Activated T-helper 1 cell treated with anti-CD3 and anti-CD28 coated beads, Interleukin-12 subunit alpha, Interleukin-12 subunit beta, Interleukin-2, Interleukin-4 antibody, amounts not matched to agents 30 ng/mL and 10 ng/mL and 1 ng/mL, durations not matched to agents 14 hours and 24 hours and 36 hours (primary cell): ENCODE measurements at regions of chr11 and their contacts with region 1.

Region 1: DNA sequence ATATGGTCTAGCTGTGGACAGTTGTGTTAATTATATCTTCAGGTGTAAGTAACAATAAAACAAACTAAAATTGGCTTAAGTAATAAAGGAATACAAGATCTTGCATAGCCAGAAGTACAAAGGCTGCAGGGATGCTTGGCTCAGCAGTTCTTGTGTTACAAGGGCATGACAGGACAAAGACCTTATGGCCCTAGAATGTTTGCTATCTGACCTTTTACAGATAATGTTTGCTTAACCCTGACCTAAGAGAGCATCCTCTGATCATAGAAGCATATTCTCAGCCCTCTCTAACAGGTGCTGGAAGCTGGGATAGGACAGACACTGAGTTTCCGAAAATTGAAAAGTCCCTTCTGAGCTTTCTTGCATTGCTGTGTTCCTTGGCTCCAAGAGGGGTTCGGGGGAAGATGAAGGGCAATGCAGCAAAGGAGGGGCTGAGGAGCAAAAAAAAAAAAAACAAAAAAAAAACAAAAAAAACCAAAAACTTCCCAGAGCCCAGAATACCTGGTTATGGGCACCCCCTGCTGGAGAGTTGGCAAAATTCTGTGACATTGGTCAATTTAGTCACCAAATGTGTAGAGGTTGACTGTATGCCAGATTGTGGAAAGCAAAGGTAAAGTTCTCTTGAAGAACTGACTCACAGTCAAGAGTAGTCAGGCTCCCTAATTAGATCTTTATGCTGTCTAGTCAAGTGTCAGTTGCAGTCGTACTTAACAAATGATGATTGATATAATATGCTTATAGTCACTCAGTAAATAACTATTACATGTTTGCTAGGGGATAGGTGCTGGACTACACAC is 10.4 kb upstream of the HIKESHI start:
- DNase-seq: peak; percentile 39
- H3K4me3 Mint-ChIP-seq: peak overlapping the region; percentile 34
- H3K27ac Mint-ChIP-seq: peak overlapping the region; percentile 82
- H3K4me1 Mint-ChIP-seq: peaks cover 61% of the 10 kb centered on the region
- H3K27me3 Mint-ChIP-seq: no peaks in the 10 kb centered on the region

Region 2: DNA sequence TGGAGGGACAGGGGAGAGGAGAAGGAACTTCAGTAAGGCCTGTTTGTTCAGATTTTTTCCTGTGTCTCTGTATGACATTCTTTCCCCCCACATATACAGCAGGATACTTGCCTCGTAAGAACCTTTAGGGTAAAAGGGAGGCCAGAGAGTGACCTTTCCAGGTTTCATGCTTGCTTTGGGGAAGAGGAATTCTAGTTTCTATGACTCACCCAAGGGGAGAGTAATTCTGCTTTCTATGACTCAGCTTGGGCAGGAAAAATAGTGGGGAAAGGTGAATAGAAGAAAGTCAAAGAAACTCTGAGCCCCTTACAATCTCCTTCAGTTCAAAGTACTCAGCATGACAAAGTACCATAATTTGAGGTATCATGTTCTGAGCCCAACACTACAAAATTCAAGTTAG is 1121.4 kb before region 1 on chr11:
- intact Hi-C with region 1: no loop called
- DNase-seq: no peak
- H3K4me3 Mint-ChIP-seq: no peak overlapping the region
- H3K27ac Mint-ChIP-seq: no peak overlapping the region
- H3K4me1 Mint-ChIP-seq: no peaks in the 10 kb centered on the region
- H3K27me3 Mint-ChIP-seq: no peaks in the 10 kb centered on the region

Region 3: DNA sequence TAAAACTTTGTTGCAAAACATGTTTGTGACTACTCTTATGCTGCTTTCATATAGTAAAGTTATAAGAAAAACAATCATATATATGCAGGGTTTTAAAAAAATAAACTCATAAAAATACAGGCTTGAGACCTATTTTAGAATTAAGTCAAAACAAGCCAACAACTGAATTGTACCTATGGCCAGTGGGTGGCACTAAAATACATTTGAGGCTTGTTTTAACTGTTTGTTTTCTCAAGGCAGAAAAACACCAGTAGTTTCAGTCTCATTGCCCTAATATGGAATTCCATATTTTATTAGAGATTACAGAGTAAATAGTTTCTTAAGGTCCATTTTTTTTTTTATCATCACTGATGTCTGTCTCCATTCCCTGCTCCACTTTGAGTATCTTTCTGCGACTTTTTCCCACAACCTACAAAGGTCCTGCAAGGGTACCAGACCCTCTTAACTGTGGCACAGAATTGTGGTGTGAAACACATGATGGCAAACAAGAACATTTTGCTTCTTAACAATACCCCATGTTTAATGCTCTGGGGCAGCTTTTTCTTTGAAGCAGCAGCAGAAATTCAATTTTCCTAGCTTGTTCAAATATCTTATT is 597.2 kb before region 1 on chr11:
- intact Hi-C with region 1: no loop called
- DNase-seq: no peak
- H3K4me3 Mint-ChIP-seq: no peak overlapping the region
- H3K27ac Mint-ChIP-seq: no peak overlapping the region
- H3K4me1 Mint-ChIP-seq: peaks cover 51% of the 10 kb centered on the region
- H3K27me3 Mint-ChIP-seq: peaks cover 4% of the 10 kb centered on the region

Region 4: GRCh38 chr11:85752890-85753581 is 538.6 kb before region 1 on chr11:
- intact Hi-C with region 1: loop called (anchors 2 kb)
- DNase-seq: peak; percentile 89
- H3K4me3 Mint-ChIP-seq: peak overlapping the region; percentile 73
- H3K27ac Mint-ChIP-seq: peak overlapping the region; percentile 98
- H3K4me1 Mint-ChIP-seq: peaks cover 99% of the 10 kb centered on the region
- H3K27me3 Mint-ChIP-seq: peaks cover 4% of the 10 kb centered on the region

Region 5: GRCh38 chr11:85947431-85948272 is 344.0 kb before region 1 on chr11:
- intact Hi-C with region 1: loop called (anchors 1 kb)
- DNase-seq: peak; percentile 6
- H3K4me3 Mint-ChIP-seq: peak overlapping the region; percentile 7
- H3K27ac Mint-ChIP-seq: peak overlapping the region; percentile 93
- H3K4me1 Mint-ChIP-seq: peaks cover 60% of the 10 kb centered on the region
- H3K27me3 Mint-ChIP-seq: no peaks in the 10 kb centered on the region

Region 6: DNA sequence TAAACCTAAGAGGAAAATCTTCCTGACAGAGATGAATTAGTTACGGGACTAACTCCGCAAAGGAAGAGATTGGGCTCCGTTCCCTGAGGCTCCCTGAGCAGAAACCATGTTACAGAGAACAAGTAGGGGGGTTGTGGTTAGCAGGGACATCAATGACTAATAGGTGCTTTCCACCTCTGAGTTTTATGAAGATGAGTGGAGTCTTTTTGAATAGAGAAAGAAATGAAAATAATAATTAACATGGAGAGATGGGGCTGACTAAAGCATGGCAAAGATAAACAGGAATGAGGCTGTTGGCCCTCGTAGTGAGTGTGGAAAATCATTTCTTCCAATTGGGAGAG is 175.3 kb before region 1 on chr11:
- intact Hi-C with region 1: loop called (anchors 5 kb)
- DNase-seq: no peak
- H3K4me3 Mint-ChIP-seq: peak overlapping the region; percentile 9
- H3K27ac Mint-ChIP-seq: peak overlapping the region; percentile 70
- H3K4me1 Mint-ChIP-seq: peaks cover 30% of the 10 kb centered on the region
- H3K27me3 Mint-ChIP-seq: no peaks in the 10 kb centered on the region

Region 7: DNA sequence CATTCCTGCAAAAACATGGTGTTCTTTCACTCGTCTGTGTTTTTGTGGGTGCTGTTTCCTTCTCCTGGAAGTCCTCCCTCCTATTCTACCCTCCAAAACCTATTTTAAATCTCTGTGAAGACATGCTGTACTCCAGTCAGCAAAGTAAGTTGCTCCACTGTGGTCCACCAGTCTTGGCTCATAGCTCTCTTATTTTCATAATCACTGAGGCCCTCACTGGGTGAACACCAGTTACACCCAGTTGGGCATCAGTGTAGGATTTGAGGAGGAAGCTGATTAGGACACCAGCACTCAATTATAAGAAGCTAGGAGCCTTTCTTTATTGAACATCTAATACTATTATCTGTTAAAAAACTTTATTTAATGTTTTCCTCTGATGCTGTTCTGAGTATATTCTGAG is 71.0 kb before region 1 on chr11:
- intact Hi-C with region 1: no loop called
- DNase-seq: no peak
- H3K4me3 Mint-ChIP-seq: peak overlapping the region; percentile 13
- H3K27ac Mint-ChIP-seq: peak overlapping the region; percentile 43
- H3K4me1 Mint-ChIP-seq: peaks cover 59% of the 10 kb centered on the region
- H3K27me3 Mint-ChIP-seq: no peaks in the 10 kb centered on the region

Region 8: DNA sequence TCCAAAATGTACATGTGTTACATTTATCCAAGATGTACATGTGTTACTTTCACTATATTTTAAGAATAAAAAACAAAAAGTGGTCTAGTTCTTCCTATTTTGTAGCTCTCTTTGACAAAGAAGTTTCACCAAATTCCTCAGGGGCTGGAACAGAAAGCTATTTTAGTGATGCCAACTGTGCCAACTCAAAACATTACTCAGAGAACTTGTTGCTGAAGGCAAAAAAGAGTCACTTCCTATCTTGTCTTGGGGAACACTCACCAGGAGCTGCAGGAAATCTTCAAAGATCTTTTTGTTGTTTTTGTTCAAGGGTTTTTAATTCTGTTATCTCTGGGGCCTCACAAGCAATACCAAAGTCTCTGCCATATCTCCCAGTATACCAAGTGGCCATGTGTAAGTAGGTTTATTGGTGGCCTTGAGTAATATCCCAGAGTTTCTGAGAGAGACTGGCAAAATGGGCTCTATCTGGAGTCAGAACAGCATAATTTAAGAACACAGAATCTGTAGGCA is 60.7 kb before region 1 on chr11:
- intact Hi-C with region 1: loop called (anchors 1 kb)
- DNase-seq: no peak
- H3K4me3 Mint-ChIP-seq: no peak overlapping the region
- H3K27ac Mint-ChIP-seq: peak overlapping the region; percentile 47
- H3K4me1 Mint-ChIP-seq: peaks cover 68% of the 10 kb centered on the region
- H3K27me3 Mint-ChIP-seq: no peaks in the 10 kb centered on the region

Region 9: GRCh38 chr11:86418917-86419316 is 127.3 kb after region 1 on chr11:
- intact Hi-C with region 1: loop called (anchors 5 kb)
- DNase-seq: no peak
- H3K4me3 Mint-ChIP-seq: no peak overlapping the region
- H3K27ac Mint-ChIP-seq: peak overlapping the region; percentile 14
- H3K4me1 Mint-ChIP-seq: peaks cover 19% of the 10 kb centered on the region
- H3K27me3 Mint-ChIP-seq: no peaks in the 10 kb centered on the region

Region 10: DNA sequence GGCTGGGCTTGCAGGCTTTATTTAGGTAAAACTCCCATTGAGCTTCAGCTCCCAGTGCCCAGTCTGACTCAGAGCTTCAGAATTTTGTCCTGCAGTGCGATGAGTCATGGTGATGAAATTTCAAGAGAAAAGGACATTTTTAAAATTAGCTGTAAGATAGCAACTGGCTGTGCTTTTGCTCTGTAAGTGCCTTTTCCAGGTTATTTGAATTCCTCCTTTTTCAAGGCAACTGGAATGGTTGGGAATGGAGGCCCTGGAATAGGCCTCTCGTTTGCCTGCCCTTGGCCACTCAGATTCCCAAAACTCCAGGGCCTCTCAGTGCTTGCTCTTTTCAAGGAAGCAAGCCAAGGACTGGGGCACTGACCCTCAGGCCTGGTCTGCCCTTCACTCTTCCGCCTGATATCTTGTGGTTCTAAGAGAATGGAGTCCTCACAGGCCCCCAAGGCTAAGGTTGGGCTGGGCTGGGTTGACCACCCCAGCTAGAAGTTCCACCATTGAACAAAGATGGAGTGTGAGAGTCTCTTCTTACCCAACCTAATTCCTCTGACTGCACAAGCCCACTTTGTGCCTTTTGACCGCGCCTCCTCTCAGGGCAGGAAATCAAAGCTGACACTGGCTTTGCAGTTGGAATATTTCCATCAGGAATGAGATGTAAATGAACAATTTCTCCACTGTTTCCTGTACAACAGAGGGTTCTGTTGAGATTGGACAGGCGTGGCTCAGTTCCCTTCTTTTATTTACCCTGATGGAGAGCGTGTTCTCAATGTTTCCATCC is 449.2 kb after region 1 on chr11:
- intact Hi-C with region 1: loop called (anchors 1 kb)
- DNase-seq: no peak
- H3K4me3 Mint-ChIP-seq: no peak overlapping the region
- H3K27ac Mint-ChIP-seq: no peak overlapping the region
- H3K4me1 Mint-ChIP-seq: peaks cover 41% of the 10 kb centered on the region
- H3K27me3 Mint-ChIP-seq: no peaks in the 10 kb centered on the region